ENCODE measurements at regions of chr4 and their contacts with region 1.

Region 1: GRCh38 chr4:15327311-15328298 is 100.2 kb upstream of the C1QTNF7 start:
- DNase-seq: peak in 1 of 5 donors; percentile 45
- ATAC-seq: peak; percentile 40 to 91 (median 62)
- H3K4me3 ChIP-seq: no peak overlapping the region
- H3K27ac ChIP-seq: peak overlapping the region in 3 of 12 donors; percentile 13 to 64 (median 29)
- H3K4me1 ChIP-seq: peaks cover 0 to 4% (median 0%) of the 10 kb centered on the region in 12 donors
- H3K27me3 ChIP-seq: no peaks in the 10 kb centered on the region
- CTCF ChIP-seq: no peak
- POLR2A ChIP-seq: no peak

Region 2: GRCh38 chr4:15375667-15376066 is 48.1 kb after region 1 on chr4:
- intact Hi-C with region 1: loop called in 1 of 10 experiments (anchors 2 kb)
- DNase-seq: no peak
- ATAC-seq: peak; percentile 43 to 72 (median 52)
- H3K4me3 ChIP-seq: peak overlapping the region in 6 of 12 donors; percentile 15 to 55 (median 46)
- H3K27ac ChIP-seq: peak overlapping the region; percentile 19 to 80 (median 60)
- H3K4me1 ChIP-seq: peaks cover 0 to 55% (median 14%) of the 10 kb centered on the region in 12 donors
- H3K27me3 ChIP-seq: no peaks in the 10 kb centered on the region
- CTCF ChIP-seq: no peak
- POLR2A ChIP-seq: no peak

Measured in heart left ventricle (tissue), 16 donors.